Caco-2 (cell line): ENCODE measurements at regions of chr4 and their contacts with region 1.

Region 1: GRCh38 chr4:55184600-55185523 is 59.5 kb upstream of the KDR start:
- DNase-seq: peak; percentile 43 to 57
- H3K4me3 ChIP-seq: no peak overlapping the region
- H3K4me3 Mint-ChIP-seq: no peak overlapping the region
- H3K27ac Mint-ChIP-seq: no peak overlapping the region
- H3K4me1 ChIP-seq: no peaks in the 10 kb centered on the region
- H3K4me1 Mint-ChIP-seq: no peaks in the 10 kb centered on the region
- H3K27me3 ChIP-seq: no peaks in the 10 kb centered on the region; the same call in 1 of the 2 replicates
- H3K27me3 Mint-ChIP-seq: no peaks in the 10 kb centered on the region
- CTCF ChIP-seq: peak; percentile 40 to 59

Region 2: GRCh38 chr4:54913751-54914526 is 270.9 kb before region 1 on chr4:
- CTCF ChIA-PET with region 1: no interaction called
- POLR2A ChIA-PET with region 1: no interaction called
- intact Hi-C with region 1: no loop called
- DNase-seq: peak; percentile 7 to 41
- H3K4me3 ChIP-seq: no peak overlapping the region
- H3K4me3 Mint-ChIP-seq: no peak overlapping the region
- H3K27ac Mint-ChIP-seq: no peak overlapping the region
- H3K4me1 ChIP-seq: peaks cover 10% of the 10 kb centered on the region
- H3K4me1 Mint-ChIP-seq: no peaks in the 10 kb centered on the region
- H3K27me3 ChIP-seq: no peaks in the 10 kb centered on the region
- H3K27me3 Mint-ChIP-seq: peaks cover 3% of the 10 kb centered on the region
- CTCF ChIP-seq: no peak

Region 3: GRCh38 chr4:54971474-54971950 is 213.3 kb before region 1 on chr4:
- CTCF ChIA-PET with region 1: interaction called, 5 read pairs
- POLR2A ChIA-PET with region 1: no interaction called
- intact Hi-C with region 1: loop called (anchors 5 kb)
- DNase-seq: peak in 1 of 2 experiments; percentile 42
- H3K4me3 ChIP-seq: no peak overlapping the region
- H3K4me3 Mint-ChIP-seq: no peak overlapping the region
- H3K27ac Mint-ChIP-seq: no peak overlapping the region
- H3K4me1 ChIP-seq: no peaks in the 10 kb centered on the region
- H3K4me1 Mint-ChIP-seq: peaks cover 6% of the 10 kb centered on the region
- H3K27me3 ChIP-seq: no peaks in the 10 kb centered on the region
- H3K27me3 Mint-ChIP-seq: peaks cover 8% of the 10 kb centered on the region
- CTCF ChIP-seq: peak; percentile 52 to 86

Region 4: DNA sequence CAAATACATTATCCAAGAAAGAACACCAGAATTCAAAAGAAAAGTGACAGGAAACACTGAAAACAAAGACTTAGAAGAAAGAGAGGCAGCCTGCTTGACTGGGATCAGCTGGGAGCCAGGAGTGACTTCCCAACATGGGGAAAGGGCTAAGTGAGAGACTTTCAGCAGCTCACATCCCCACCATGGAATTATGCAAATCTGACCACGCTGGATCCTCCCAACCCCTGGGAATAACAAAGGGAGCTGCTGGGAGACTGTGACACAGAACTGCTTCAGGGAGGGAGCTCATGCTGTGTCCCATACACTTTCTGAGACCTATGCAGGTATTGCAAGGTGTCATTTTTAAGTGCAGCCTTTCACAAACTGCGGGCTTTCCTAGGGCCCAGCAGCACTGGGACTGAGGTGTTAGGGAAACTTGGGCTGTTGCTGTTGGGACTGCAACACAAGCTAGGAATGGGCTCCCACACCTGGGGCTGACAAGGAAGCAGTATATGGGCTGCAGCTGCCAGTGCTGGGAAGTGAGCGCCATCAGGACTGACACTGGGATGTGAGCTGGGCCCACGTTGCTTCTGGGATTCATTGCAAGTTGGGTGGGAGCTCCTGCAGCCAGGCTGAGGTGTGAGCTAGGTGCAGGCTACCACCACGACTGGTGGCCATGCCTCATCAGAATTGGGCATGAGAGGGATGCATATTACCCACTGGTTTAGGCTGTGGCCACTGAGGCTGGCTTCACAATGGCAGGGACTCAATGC is 198.6 kb before region 1 on chr4:
- CTCF ChIA-PET with region 1: no interaction called
- POLR2A ChIA-PET with region 1: no interaction called
- intact Hi-C with region 1: no loop called
- DNase-seq: no peak
- H3K4me3 ChIP-seq: no peak overlapping the region
- H3K4me3 Mint-ChIP-seq: no peak overlapping the region
- H3K27ac Mint-ChIP-seq: no peak overlapping the region
- H3K4me1 ChIP-seq: no peaks in the 10 kb centered on the region
- H3K4me1 Mint-ChIP-seq: no peaks in the 10 kb centered on the region
- H3K27me3 ChIP-seq: no peaks in the 10 kb centered on the region
- H3K27me3 Mint-ChIP-seq: no peaks in the 10 kb centered on the region
- CTCF ChIP-seq: no peak

Region 5: GRCh38 chr4:55143863-55144262 is 41.0 kb before region 1 on chr4:
- CTCF ChIA-PET with region 1: no interaction called
- POLR2A ChIA-PET with region 1: no interaction called
- intact Hi-C with region 1: no loop called
- DNase-seq: no peak
- H3K4me3 ChIP-seq: no peak overlapping the region
- H3K4me3 Mint-ChIP-seq: no peak overlapping the region
- H3K27ac Mint-ChIP-seq: no peak overlapping the region
- H3K4me1 ChIP-seq: no peaks in the 10 kb centered on the region
- H3K4me1 Mint-ChIP-seq: no peaks in the 10 kb centered on the region
- H3K27me3 ChIP-seq: no peaks in the 10 kb centered on the region
- H3K27me3 Mint-ChIP-seq: no peaks in the 10 kb centered on the region
- CTCF ChIP-seq: no peak

Region 6: GRCh38 chr4:55321707-55322264 is 136.9 kb after region 1 on chr4:
- CTCF ChIA-PET with region 1: interaction called, 9 read pairs
- POLR2A ChIA-PET with region 1: no interaction called
- intact Hi-C with region 1: loop called (anchors 1 kb)
- DNase-seq: peak; percentile 69 to 73
- H3K4me3 ChIP-seq: no peak overlapping the region
- H3K4me3 Mint-ChIP-seq: no peak overlapping the region
- H3K27ac Mint-ChIP-seq: no peak overlapping the region
- H3K4me1 ChIP-seq: no peaks in the 10 kb centered on the region
- H3K4me1 Mint-ChIP-seq: no peaks in the 10 kb centered on the region
- H3K27me3 ChIP-seq: no peaks in the 10 kb centered on the region
- H3K27me3 Mint-ChIP-seq: peaks cover 17% of the 10 kb centered on the region
- CTCF ChIP-seq: peak; percentile 43 to 49

Region 7: GRCh38 chr4:55554453-55555030 is 369.7 kb after region 1 on chr4:
- CTCF ChIA-PET with region 1: no interaction called
- POLR2A ChIA-PET with region 1: no interaction called
- intact Hi-C with region 1: loop called (anchors 10 kb)
- DNase-seq: no peak
- H3K4me3 ChIP-seq: no peak overlapping the region
- H3K4me3 Mint-ChIP-seq: no peak overlapping the region
- H3K27ac Mint-ChIP-seq: no peak overlapping the region
- H3K4me1 ChIP-seq: 0 out of 2 replicates have a peak, but pooled peaks cover 5% of the 10 kb centered on the region
- H3K4me1 Mint-ChIP-seq: peaks cover 6% of the 10 kb centered on the region
- H3K27me3 ChIP-seq: no peaks in the 10 kb centered on the region
- H3K27me3 Mint-ChIP-seq: no peaks in the 10 kb centered on the region
- CTCF ChIP-seq: peak in 1 of 2 experiments; percentile 31